ENCODE measurements at regions of chr12 and their contacts with region 1.

Region 1: DNA sequence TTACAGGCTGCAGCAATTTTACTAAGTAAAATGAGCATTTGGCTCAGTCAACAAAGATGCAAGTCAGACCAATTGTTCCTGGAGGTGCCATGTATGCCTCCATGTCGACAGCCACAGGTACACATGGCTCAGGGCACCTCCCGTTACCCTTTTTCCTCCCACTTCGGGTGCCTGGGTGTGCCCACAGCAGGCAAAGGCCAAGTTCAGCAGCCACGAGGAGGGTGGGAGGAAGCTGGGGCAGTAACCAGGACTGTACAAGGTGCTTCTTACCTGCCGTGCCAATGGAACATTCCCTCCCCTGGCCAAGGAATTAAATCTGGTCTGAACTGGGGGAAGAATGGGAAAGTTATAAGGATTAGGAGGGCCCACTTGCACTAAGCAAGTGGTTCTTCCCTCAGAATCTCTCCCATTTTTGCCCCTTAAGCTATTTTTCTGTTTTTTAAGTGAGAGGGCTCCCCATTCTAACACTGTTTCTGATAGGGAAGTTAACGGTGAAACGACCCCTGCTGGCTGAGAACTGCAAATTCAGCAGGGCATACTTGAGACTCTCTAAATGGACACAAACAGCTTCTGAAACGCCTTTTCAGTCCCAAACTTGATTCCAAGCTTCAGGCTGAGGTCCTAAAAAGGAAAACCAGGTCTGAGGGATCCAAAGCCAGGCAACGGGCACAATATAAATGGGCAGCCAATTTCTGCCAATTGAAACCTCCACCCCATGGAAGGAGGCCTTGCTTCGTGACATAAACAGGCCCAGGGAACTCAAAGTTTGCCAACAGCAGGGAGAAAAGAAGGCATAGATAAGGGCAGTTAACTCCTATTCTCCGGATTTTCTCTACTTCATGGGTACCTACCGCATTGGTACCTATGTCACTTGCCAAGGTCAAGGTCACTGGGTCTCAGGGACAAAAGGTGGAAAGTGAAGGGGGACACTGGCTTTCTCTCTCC is 24.8 kb downstream of the CLECL1 start:
- DNase-seq: peak; percentile 77
- ATAC-seq: peak; percentile 59
- H3K4me3 ChIP-seq: peak overlapping the region in 3 of 5 experiments; percentile 19 to 47 (median 31)
- H3K4me3 Mint-ChIP-seq: peak overlapping the region; percentile 35
- H3K27ac ChIP-seq: peak overlapping the region; percentile 72 to 92
- H3K27ac Mint-ChIP-seq: peak overlapping the region; percentile 89
- H3K4me1 ChIP-seq: peaks cover 76 to 78% of the 10 kb centered on the region in 2 donors
- H3K4me1 Mint-ChIP-seq: peaks cover 84% of the 10 kb centered on the region
- H3K27me3 ChIP-seq: no peaks in the 10 kb centered on the region
- H3K27me3 Mint-ChIP-seq: no peaks in the 10 kb centered on the region
- CTCF ChIP-seq: peak; percentile 76

Region 2: GRCh38 chr12:9634177-9634803 is 73.8 kb before region 1 on chr12:
- CTCF ChIA-PET with region 1: interaction called, 81 read pairs
- POLR2A ChIA-PET with region 1: no interaction called
- intact Hi-C with region 1: loop called (anchors 1 kb)
- DNase-seq: peak; percentile 86
- ATAC-seq: peak; percentile 75
- H3K4me3 ChIP-seq: no peak overlapping the region
- H3K4me3 Mint-ChIP-seq: peak overlapping the region; percentile 72
- H3K27ac ChIP-seq: peak overlapping the region; percentile 1 to 82
- H3K27ac Mint-ChIP-seq: peak overlapping the region; percentile 83
- H3K4me1 ChIP-seq: peaks cover 48 to 53% of the 10 kb centered on the region in 2 donors
- H3K4me1 Mint-ChIP-seq: peaks cover 59% of the 10 kb centered on the region
- H3K27me3 ChIP-seq: no peaks in the 10 kb centered on the region
- H3K27me3 Mint-ChIP-seq: no peaks in the 10 kb centered on the region
- CTCF ChIP-seq: peak; percentile 92

Region 3: GRCh38 chr12:9667403-9668160 is 40.6 kb before region 1 on chr12:
- CTCF ChIA-PET with region 1: interaction called, 22 read pairs
- POLR2A ChIA-PET with region 1: interaction called, 4 read pairs
- intact Hi-C with region 1: loop called (anchors 5 kb)
- DNase-seq: peak; percentile 70
- ATAC-seq: peak; percentile 31
- H3K4me3 ChIP-seq: peak overlapping the region in 3 of 5 experiments; percentile 21 to 77 (median 25)
- H3K4me3 Mint-ChIP-seq: peak overlapping the region; percentile 78
- H3K27ac ChIP-seq: peak overlapping the region; percentile 76 to 87
- H3K27ac Mint-ChIP-seq: peak overlapping the region; percentile 90
- H3K4me1 ChIP-seq: peaks cover 46 to 56% of the 10 kb centered on the region in 2 donors
- H3K4me1 Mint-ChIP-seq: peaks cover 57% of the 10 kb centered on the region
- H3K27me3 ChIP-seq: no peaks in the 10 kb centered on the region
- H3K27me3 Mint-ChIP-seq: no peaks in the 10 kb centered on the region
- CTCF ChIP-seq: no peak

Region 4: DNA sequence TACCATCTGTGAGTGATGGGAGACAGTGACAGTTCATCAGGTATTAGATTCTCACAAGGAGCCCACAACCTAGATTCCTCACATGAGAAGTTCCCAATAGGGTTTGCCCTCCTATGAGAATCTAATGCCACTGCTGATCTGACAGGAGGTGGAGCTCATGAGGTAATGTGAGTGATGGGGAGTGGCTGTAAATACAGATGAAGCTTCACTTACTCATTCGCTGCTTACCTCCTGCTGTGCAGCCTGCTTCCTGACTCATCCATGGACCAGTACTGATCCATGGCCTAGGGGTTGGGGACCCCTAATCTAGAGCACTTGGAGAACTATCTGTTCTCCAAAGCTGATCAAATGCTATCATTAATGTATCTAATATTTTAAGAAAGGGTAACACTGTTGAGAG is 20.9 kb before region 1 on chr12:
- CTCF ChIA-PET with region 1: interaction called, 18 read pairs
- POLR2A ChIA-PET with region 1: interaction called, 4 read pairs
- intact Hi-C with region 1: no loop called
- DNase-seq: no peak
- ATAC-seq: no peak
- H3K4me3 ChIP-seq: no peak overlapping the region
- H3K4me3 Mint-ChIP-seq: no peak overlapping the region
- H3K27ac ChIP-seq: peak overlapping the region in 1 of 2 donors; percentile 67
- H3K27ac Mint-ChIP-seq: no peak overlapping the region
- H3K4me1 ChIP-seq: peaks cover 33 to 44% of the 10 kb centered on the region in 2 donors
- H3K4me1 Mint-ChIP-seq: peaks cover 52% of the 10 kb centered on the region
- H3K27me3 ChIP-seq: no peaks in the 10 kb centered on the region
- H3K27me3 Mint-ChIP-seq: no peaks in the 10 kb centered on the region
- CTCF ChIP-seq: no peak

Region 5: DNA sequence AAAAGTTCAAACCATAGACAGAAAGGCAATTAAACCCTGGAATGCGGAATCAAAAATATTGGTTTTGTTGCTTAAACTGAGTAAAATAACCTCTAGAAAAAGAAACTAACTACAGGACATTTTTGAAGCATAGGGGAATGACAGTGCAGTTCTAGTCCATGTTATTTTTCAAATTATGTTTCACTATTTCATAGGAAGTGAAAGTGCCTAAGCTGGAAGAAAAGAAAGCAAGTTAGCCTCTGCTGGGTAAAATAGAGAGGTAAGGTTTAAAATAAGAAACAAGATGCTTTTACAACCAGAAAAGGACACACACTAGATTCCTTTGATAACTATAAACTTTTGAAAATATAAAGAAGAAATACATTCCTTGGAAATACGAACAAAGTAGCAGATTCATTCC is 23.7 kb after region 1 on chr12:
- CTCF ChIA-PET with region 1: interaction called, 10 read pairs
- POLR2A ChIA-PET with region 1: interaction called, 4 read pairs
- intact Hi-C with region 1: loop called (anchors 2 kb)
- DNase-seq: peak; percentile 69
- ATAC-seq: peak; percentile 64
- H3K4me3 ChIP-seq: peak overlapping the region; percentile 35 to 74 (median 44)
- H3K4me3 Mint-ChIP-seq: peak overlapping the region; percentile 92
- H3K27ac ChIP-seq: peak overlapping the region; percentile 83 to 94
- H3K27ac Mint-ChIP-seq: peak overlapping the region; percentile 95
- H3K4me1 ChIP-seq: peaks cover 42 to 58% of the 10 kb centered on the region in 2 donors
- H3K4me1 Mint-ChIP-seq: peaks cover 68% of the 10 kb centered on the region
- H3K27me3 ChIP-seq: no peaks in the 10 kb centered on the region
- H3K27me3 Mint-ChIP-seq: no peaks in the 10 kb centered on the region
- CTCF ChIP-seq: no peak

Region 6: GRCh38 chr12:9992296-9992695 is 284.2 kb after region 1 on chr12:
- CTCF ChIA-PET with region 1: no interaction called
- POLR2A ChIA-PET with region 1: no interaction called
- intact Hi-C with region 1: no loop called
- DNase-seq: peak; percentile 33
- ATAC-seq: no peak
- H3K4me3 ChIP-seq: peak overlapping the region in 1 of 5 experiments; percentile 1
- H3K4me3 Mint-ChIP-seq: peak overlapping the region; percentile 40
- H3K27ac ChIP-seq: no peak overlapping the region
- H3K27ac Mint-ChIP-seq: no peak overlapping the region
- H3K4me1 ChIP-seq: peaks cover 5 to 16% of the 10 kb centered on the region in 2 donors
- H3K4me1 Mint-ChIP-seq: peaks cover 12% of the 10 kb centered on the region
- H3K27me3 ChIP-seq: peaks cover 0 to 21% (median 7%) of the 10 kb centered on the region in 4 experiments
- H3K27me3 Mint-ChIP-seq: peaks cover 72% of the 10 kb centered on the region
- CTCF ChIP-seq: no peak